Activated B cell treated with CpG ODN at 0.5 μM for 24 hours (primary cell): ENCODE measurements at regions of chr10 and their contacts with region 1.

Region 1: DNA sequence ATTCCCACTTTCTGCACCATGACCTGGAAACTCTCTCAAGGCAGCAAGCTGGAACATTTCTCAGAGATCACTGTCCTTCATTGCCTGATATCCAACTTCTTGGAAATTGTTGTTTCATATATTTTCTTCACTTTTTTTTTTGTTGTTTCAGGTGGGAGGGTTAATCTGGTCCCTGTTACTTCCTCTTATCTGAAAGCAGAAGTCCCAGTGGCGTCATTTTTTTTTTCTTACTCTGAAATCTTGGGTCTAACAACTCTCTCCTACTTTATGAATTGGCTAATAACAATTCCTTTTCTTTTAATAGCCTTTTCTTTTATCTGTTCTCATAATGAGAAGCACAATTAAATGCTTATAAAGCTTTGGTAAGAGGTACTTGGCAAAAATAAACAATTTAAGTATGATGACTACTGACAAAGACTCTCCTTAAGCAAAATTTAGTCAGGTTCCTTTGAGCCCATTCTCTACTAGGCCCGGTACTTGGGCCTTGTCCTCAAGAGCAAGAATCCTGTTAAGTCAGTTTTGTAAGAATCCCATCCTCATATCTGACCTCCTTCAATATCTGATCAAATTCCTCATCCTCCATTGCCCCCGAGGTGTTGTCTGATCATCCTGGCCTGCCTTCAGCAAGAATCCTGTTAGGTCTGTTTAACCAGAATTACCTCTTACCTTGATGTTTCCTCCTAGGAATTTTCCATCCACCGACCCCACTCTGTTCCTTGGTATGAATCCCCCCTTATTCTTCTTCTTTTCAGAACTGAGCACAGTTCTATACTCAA is 11.5 kb upstream of the CC2D2B start:
- DNase-seq: no peak
- ATAC-seq: peak; percentile 72
- H3K4me3 Mint-ChIP-seq: no peak overlapping the region
- H3K27ac Mint-ChIP-seq: peak overlapping the region; percentile 80
- H3K4me1 Mint-ChIP-seq: peaks cover 18% of the 10 kb centered on the region
- H3K27me3 Mint-ChIP-seq: no peaks in the 10 kb centered on the region
- CTCF ChIP-seq: no peak

Region 2: DNA sequence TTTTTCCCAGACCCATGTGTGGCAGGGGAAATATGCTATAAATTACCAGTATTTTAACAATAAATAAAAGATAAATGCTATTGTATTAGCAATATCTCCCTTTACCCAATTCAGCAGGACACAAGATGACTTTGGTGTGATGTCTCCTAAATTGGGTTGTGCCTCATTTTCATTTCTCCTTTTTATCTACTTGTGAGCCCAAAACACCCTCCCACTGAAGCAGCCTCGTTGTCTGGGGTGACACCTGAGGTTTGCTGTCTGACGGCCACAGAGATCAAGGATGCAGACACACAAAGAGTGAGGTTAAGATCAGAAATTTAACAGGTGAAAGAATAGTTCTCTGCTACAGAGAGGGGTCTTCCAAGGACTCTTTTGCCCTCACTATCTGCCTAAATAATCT is 15.6 kb before region 1 on chr10:
- CTCF ChIA-PET with region 1: no interaction called
- POLR2A ChIA-PET with region 1: no interaction called
- intact Hi-C with region 1: loop called (anchors 2 kb)
- DNase-seq: no peak
- ATAC-seq: peak; percentile 31
- H3K4me3 Mint-ChIP-seq: no peak overlapping the region
- H3K27ac Mint-ChIP-seq: no peak overlapping the region
- H3K4me1 Mint-ChIP-seq: peaks cover 6% of the 10 kb centered on the region
- H3K27me3 Mint-ChIP-seq: no peaks in the 10 kb centered on the region
- CTCF ChIP-seq: no peak